GM12878 (cell line): ENCODE measurements at regions of chr15 and their contacts with region 1.

Region 1: DNA sequence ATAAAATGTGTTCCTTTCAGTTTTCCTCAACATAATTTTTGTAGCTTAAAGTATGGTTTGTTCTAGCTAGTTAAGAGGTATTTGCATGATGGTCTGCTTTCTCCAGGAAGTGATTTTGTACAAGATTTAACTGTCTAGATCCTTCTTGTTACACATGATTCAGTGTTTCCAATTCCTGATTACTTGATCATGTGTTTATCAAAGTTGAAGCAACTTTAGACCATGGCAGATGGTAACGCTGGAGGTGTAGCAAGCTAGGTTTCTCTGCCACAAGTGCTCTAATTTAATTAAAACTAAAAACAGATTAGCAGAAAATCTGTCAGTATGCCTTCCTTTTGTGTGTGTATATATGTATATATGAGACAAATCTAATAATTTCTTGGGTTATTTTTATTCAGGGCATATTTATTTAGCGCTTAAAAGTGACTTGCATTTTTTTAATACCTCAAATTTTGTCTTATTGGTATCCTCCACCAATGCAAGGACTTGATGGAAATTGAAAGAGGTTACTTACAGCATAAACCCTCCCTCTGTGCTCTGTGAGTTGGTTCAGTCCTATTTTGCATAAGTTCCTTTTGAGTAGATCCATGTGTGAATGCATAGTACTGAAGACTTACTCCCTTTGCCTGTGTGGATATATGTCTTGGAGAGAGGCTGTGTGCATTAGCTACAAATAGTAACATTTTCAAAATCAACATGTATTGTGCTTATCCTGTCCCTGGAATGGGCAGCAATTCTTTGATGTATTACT is 157.3 kb upstream of the CGNL1 start:
- DNase-seq: no peak
- ATAC-seq: peak; percentile 74
- H3K4me3 ChIP-seq: no peak overlapping the region
- H3K27ac ChIP-seq: no peak overlapping the region
- H3K4me1 ChIP-seq: peaks cover 5% of the 10 kb centered on the region; the same call in 1 of the 2 replicates
- H3K27me3 ChIP-seq: no peaks in the 10 kb centered on the region
- CTCF ChIP-seq: no peak
- EP300 ChIP-seq: no peak
- POLR2A ChIP-seq: no peak
- RAD21 ChIP-seq: no peak

Region 2: DNA sequence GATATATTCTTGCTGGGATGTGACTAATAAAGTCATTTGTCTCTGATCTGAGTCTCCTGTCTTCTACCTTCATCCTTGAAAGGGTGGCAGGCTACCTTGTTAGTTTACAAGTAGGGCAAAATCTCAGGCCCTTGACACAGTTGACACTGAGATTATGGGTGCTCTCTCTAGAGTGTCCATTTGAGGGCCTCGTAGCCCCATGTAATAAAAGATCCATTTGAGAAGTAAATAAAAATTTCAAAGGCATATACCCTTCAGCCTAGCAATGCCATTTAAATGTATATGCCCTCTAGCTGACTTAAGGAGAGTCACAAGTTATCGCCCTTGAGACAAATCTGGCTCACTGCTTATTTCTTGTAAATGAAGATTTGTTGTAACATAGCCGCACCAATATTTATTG is 202.0 kb before region 1 on chr15:
- CTCF ChIA-PET with region 1: no interaction called
- POLR2A ChIA-PET with region 1: no interaction called
- RAD21 ChIA-PET with region 1: no interaction called
- SMC1A ChIA-PET with region 1: interaction called, 5 read pairs
- in situ Hi-C with region 1: no loop called
- intact Hi-C with region 1: loop called (anchors 10 kb)
- DNase-seq: no peak
- ATAC-seq: peak; percentile 67
- H3K4me3 ChIP-seq: no peak overlapping the region
- H3K27ac ChIP-seq: no peak overlapping the region
- H3K4me1 ChIP-seq: no peaks in the 10 kb centered on the region
- H3K27me3 ChIP-seq: no peaks in the 10 kb centered on the region
- CTCF ChIP-seq: peak in 2 of 3 experiments; percentile 32 to 36; a peak in 2 of 6 replicates
- EP300 ChIP-seq: no peak
- POLR2A ChIP-seq: no peak
- RAD21 ChIP-seq: peak; percentile 65

Region 3: GRCh38 chr15:57205996-57206395 is 13.0 kb before region 1 on chr15:
- CTCF ChIA-PET with region 1: interaction called, 4 read pairs
- POLR2A ChIA-PET with region 1: interaction called, 3 read pairs
- RAD21 ChIA-PET with region 1: no interaction called
- SMC1A ChIA-PET with region 1: interaction called, 11 read pairs
- in situ Hi-C with region 1: no loop called
- intact Hi-C with region 1: no loop called
- DNase-seq: no peak
- ATAC-seq: no peak
- H3K4me3 ChIP-seq: no peak overlapping the region
- H3K27ac ChIP-seq: no peak overlapping the region
- H3K4me1 ChIP-seq: no peaks in the 10 kb centered on the region
- H3K27me3 ChIP-seq: no peaks in the 10 kb centered on the region
- CTCF ChIP-seq: no peak
- EP300 ChIP-seq: no peak
- POLR2A ChIP-seq: no peak
- RAD21 ChIP-seq: no peak

Region 4: DNA sequence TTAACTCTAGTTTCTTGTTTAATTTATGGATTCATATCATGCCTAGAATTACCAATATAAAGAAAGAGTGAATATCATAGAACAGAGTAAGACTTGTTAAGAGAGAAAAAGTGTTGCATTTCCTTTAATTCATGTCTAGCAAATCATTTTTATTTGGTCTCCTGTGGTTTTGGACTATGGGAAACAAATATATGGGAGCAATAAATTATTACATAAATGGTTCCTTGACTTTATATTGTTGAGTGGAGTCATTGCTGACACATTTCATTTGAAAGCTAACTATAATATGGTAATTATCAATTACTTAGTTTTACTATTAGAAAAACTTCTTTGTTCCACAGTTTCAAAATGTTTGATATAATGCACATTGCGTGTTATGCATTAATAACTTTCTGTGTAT is 12.6 kb after region 1 on chr15:
- CTCF ChIA-PET with region 1: interaction called, 6 read pairs
- POLR2A ChIA-PET with region 1: no interaction called
- RAD21 ChIA-PET with region 1: interaction called, 4 read pairs
- SMC1A ChIA-PET with region 1: interaction called, 11 read pairs
- in situ Hi-C with region 1: no loop called
- intact Hi-C with region 1: no loop called
- DNase-seq: no peak
- ATAC-seq: no peak
- H3K4me3 ChIP-seq: no peak overlapping the region
- H3K27ac ChIP-seq: no peak overlapping the region
- H3K4me1 ChIP-seq: no peaks in the 10 kb centered on the region
- H3K27me3 ChIP-seq: no peaks in the 10 kb centered on the region
- CTCF ChIP-seq: no peak
- EP300 ChIP-seq: no peak
- POLR2A ChIP-seq: no peak
- RAD21 ChIP-seq: no peak

Region 5: DNA sequence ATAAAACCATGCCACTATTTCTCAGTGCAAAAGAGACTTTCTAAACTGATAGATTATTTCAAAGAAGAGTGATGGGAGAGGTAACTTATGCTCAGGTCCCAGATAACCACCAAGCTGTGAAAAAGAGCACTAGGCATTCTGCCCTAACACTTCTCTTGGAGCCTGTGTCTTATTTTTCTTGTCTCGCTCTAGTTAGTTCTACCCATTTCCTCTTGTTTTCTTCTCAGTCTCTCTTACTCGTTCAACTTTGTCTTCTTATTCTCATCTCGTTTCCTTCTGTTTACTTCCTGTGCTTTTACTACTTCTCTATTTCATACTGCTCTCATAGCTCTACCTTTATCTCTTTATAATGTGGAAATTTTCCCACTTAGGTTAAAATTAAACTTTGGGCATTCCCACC is 65.5 kb after region 1 on chr15:
- CTCF ChIA-PET with region 1: interaction called, 5 read pairs
- POLR2A ChIA-PET with region 1: interaction called, 6 read pairs
- RAD21 ChIA-PET with region 1: interaction called, 3 read pairs
- SMC1A ChIA-PET with region 1: interaction called, 12 read pairs
- in situ Hi-C with region 1: no loop called
- intact Hi-C with region 1: no loop called
- DNase-seq: no peak
- ATAC-seq: peak; percentile 75
- H3K4me3 ChIP-seq: peak overlapping the region; percentile 24; the same call in 1 of the 2 replicates
- H3K27ac ChIP-seq: peak overlapping the region; percentile 54
- H3K4me1 ChIP-seq: peaks cover 56% of the 10 kb centered on the region
- H3K27me3 ChIP-seq: no peaks in the 10 kb centered on the region
- CTCF ChIP-seq: no peak
- EP300 ChIP-seq: no peak
- POLR2A ChIP-seq: no peak
- RAD21 ChIP-seq: no peak

Region 6: DNA sequence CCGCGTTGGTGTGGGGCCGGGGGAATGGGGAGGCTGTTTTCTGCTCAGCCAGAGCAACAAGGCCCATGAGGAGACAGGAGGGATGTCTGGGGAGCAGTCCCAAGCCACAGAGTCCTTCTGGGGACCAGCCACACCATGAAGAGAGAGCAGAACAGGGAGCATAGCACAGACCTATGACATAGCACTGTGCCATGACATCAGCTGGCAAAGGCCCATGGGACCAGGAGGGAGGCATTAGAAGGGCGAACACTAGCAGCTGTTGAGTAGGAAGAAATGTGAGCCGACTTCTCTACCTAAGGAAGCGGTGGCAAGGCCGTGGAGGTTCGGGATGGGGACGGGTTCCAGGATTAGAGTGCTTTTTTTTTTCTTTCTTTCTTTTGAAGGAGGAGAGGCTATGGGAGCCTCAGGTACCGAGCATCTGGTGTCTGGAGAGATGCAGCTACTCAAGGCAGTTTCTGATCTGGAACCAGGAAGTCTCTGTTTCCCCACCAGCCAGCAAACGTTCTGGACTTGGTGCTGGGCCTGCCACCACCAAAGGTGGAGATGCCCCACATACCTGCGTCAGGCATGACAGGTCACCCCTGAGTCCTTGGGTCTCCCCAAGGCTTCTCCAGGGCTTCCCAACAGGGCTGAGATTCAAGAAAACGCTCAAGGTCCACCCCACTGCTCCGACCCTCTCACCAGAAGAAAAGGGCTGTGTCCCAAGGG is 80.0 kb after region 1 on chr15:
- CTCF ChIA-PET with region 1: interaction called, 36 read pairs
- POLR2A ChIA-PET with region 1: no interaction called
- RAD21 ChIA-PET with region 1: interaction called, 6 read pairs
- SMC1A ChIA-PET with region 1: interaction called, 29 read pairs
- in situ Hi-C with region 1: no loop called
- intact Hi-C with region 1: loop called (anchors 5 kb)
- DNase-seq: no peak
- ATAC-seq: peak; percentile 5; the same call in 1 of the 3 replicates
- H3K4me3 ChIP-seq: peak overlapping the region; percentile 58; the same call in 1 of the 2 replicates
- H3K27ac ChIP-seq: peak overlapping the region; percentile 77
- H3K4me1 ChIP-seq: peaks cover 36% of the 10 kb centered on the region
- H3K27me3 ChIP-seq: no peaks in the 10 kb centered on the region
- CTCF ChIP-seq: no peak
- EP300 ChIP-seq: no peak
- POLR2A ChIP-seq: no peak
- RAD21 ChIP-seq: no peak